ENCODE measurements at regions of chr16 and their contacts with region 1.

Region 1: DNA sequence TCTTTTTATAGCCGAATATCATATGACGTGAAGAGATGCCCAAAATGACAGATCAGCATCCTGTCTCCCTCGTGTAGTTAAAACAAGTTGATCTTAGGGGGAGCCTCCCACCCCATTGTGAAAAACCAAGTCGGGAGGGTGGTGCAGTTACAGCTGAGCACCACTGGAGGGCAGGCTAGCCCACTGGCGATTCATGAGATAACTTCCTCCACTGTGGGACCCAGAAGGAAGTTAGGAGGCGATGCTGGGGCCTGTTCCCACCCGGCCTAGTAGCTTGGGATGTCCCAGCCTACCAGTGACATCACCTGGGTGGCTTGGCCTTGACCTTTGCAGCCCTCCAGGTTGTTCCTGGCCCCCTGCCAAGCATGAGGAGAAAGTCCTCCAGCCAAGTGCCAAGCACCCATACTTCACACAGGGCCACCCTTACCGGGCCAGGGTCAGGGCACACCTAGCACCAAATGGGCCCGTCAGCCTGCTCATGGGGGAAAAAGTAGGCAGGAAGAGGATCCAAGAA is 8.1 kb upstream of the CPNE2 start:
- DNase-seq: peak; percentile 74
- H3K4me3 Mint-ChIP-seq: no peak overlapping the region
- H3K27ac Mint-ChIP-seq: no peak overlapping the region
- H3K4me1 Mint-ChIP-seq: peaks cover 4% of the 10 kb centered on the region
- H3K27me3 Mint-ChIP-seq: no peaks in the 10 kb centered on the region
- CTCF ChIP-seq: peak; percentile 92

Region 2: DNA sequence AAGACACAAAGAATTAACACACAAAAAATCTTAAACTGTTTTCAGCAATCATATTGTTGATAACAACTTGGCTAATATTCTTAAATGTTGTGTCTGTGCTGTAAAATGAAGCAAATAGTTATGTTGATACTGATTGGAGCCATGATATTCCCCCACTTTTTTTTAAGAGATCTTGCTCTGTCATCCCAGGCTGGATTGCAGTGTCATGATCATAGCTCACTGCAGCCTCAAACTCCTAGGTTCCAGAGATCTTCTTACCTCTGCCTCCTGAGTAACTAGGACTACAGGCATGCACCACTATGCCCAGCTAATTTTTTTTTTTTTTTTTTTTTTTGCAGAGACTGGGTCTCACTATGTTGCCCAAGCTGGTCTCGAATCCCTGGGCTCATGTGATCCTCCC is 590.5 kb before region 1 on chr16:
- CTCF ChIA-PET with region 1: no interaction called
- POLR2A ChIA-PET with region 1: no interaction called
- intact Hi-C with region 1: no loop called
- DNase-seq: no peak
- H3K4me3 Mint-ChIP-seq: no peak overlapping the region
- H3K27ac Mint-ChIP-seq: no peak overlapping the region
- H3K4me1 Mint-ChIP-seq: no peaks in the 10 kb centered on the region
- H3K27me3 Mint-ChIP-seq: no peaks in the 10 kb centered on the region
- CTCF ChIP-seq: no peak

Region 3: GRCh38 chr16:56866943-56867830 is 217.1 kb before region 1 on chr16:
- CTCF ChIA-PET with region 1: interaction called, 4 read pairs
- POLR2A ChIA-PET with region 1: no interaction called
- intact Hi-C with region 1: loop called (anchors 5 kb)
- DNase-seq: peak; percentile 63
- H3K4me3 Mint-ChIP-seq: no peak overlapping the region
- H3K27ac Mint-ChIP-seq: no peak overlapping the region
- H3K4me1 Mint-ChIP-seq: peaks cover 5% of the 10 kb centered on the region
- H3K27me3 Mint-ChIP-seq: no peaks in the 10 kb centered on the region
- CTCF ChIP-seq: peak; percentile 66

Region 4: DNA sequence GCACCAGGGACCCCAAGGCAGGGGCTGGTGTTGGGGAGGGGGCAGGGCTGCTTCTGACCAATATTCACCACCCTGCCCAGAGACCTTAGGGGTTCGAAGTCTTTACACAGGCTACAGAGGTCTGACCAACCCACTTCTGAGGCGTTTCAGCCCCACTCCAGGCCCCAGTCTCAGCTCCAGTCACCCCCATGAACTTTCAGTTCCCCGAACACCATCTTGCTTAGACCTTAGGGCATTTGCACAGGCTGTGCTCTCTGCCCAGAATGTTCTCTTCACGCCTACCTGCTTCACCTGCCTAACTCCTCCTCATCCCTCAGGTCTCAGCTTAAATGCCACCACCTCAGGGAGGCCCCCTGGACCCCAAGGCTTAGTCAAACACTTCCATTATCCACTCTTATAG is 17.7 kb before region 1 on chr16:
- CTCF ChIA-PET with region 1: interaction called, 23 read pairs
- POLR2A ChIA-PET with region 1: no interaction called
- intact Hi-C with region 1: no loop called
- DNase-seq: no peak
- H3K4me3 Mint-ChIP-seq: no peak overlapping the region
- H3K27ac Mint-ChIP-seq: no peak overlapping the region
- H3K4me1 Mint-ChIP-seq: peaks cover 17% of the 10 kb centered on the region
- H3K27me3 Mint-ChIP-seq: no peaks in the 10 kb centered on the region
- CTCF ChIP-seq: no peak

Region 5: GRCh38 chr16:57071831-57072582 is 12.3 kb before region 1 on chr16:
- CTCF ChIA-PET with region 1: interaction called, 23 read pairs
- POLR2A ChIA-PET with region 1: no interaction called
- intact Hi-C with region 1: no loop called
- DNase-seq: peak; percentile 52
- H3K4me3 Mint-ChIP-seq: no peak overlapping the region
- H3K27ac Mint-ChIP-seq: peak overlapping the region; percentile 76
- H3K4me1 Mint-ChIP-seq: peaks cover 22% of the 10 kb centered on the region
- H3K27me3 Mint-ChIP-seq: no peaks in the 10 kb centered on the region
- CTCF ChIP-seq: no peak

Region 6: DNA sequence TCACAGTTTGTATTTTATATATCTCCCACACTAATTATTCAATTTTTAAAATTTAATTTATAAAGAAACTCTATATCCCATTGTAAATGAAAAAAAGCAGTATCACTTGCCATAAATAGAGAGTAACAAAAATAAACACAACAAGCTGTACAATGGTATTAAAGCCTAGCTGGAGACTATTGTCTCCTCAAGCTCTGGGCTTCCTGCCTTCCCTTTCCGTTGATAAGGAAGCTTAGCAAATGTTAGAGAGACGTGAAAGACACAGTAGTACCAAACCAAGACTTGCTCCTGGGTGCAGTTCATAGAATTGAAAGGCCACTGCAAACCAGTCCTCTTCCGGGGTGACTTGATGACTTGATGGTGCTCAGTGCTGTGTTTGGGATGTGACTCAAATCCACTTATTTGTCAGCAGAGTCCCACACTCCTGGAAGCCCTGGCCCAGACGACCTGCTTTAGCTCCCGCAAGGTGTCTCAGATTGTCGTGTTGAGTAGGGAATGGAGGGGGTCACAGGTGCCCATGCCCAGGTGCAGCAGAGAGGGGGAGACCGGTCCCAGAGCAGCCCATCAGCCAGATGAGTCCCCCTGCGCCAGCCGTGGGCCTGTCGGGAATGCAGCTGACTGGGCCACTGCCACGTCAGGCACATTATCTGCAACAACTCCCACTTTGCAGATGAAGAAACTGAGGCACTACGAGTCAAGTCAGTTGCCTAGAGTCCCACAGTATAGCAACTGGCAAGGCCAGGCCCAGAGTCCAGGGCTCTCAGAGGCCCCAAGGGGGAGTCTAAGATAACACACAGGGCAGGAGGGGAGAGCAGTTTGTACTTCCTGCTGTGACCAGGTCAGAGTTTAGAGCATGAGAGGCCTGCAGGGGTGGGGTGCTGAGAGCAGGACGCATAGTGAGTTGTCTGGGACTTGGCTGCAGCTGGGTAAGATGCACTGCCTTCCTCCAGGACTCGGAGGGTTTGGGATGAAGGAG is 61.0 kb after region 1 on chr16:
- CTCF ChIA-PET with region 1: interaction called, 10 read pairs
- POLR2A ChIA-PET with region 1: no interaction called
- intact Hi-C with region 1: no loop called
- DNase-seq: no peak
- H3K4me3 Mint-ChIP-seq: no peak overlapping the region
- H3K27ac Mint-ChIP-seq: no peak overlapping the region
- H3K4me1 Mint-ChIP-seq: peaks cover 9% of the 10 kb centered on the region
- H3K27me3 Mint-ChIP-seq: no peaks in the 10 kb centered on the region
- CTCF ChIP-seq: no peak

Measured in MCF 10A (cell line).